ENCODE measurements at regions of chr15 and their contacts with region 1.

Region 1: GRCh38 chr15:74635228-74635627 is 19.6 kb downstream of the CLK3 start:
- DNase-seq: peak; percentile 66 to 83
- ATAC-seq: peak; percentile 78 to 84 (median 80)
- H3K4me3 ChIP-seq: no peak overlapping the region
- H3K27ac ChIP-seq: no peak overlapping the region
- H3K4me1 ChIP-seq: no peaks in the 10 kb centered on the region
- H3K27me3 ChIP-seq: no peaks in the 10 kb centered on the region
- CTCF ChIP-seq: peak; percentile 90

Region 2: GRCh38 chr15:74956648-74957300 is 321.5 kb after region 1 on chr15 and contains the start of gene RPP25:
- intact Hi-C with region 1: loop called (anchors 5 to 10 kb)
- DNase-seq: peak; percentile 78 to 84
- ATAC-seq: peak; percentile 83 to 90 (median 89)
- H3K4me3 ChIP-seq: peak within 1 kb of the TSS; percentile 72
- H3K27ac ChIP-seq: peak within 1 kb of the TSS; percentile 60
- H3K4me1 ChIP-seq: peaks cover 29% of the 10 kb centered on the region
- H3K27me3 ChIP-seq: peaks cover 0 to 50% (median 15%) of the 10 kb centered on the region in 3 donors
- CTCF ChIP-seq: no peak
- total RNA-seq, gene RPP25: 0.64 to 1.9 (median 1.4) TPM